Esophagus squamous epithelium (tissue), 5 donors: ENCODE measurements at regions of chr17 and their contacts with region 1.

Region 1: GRCh38 chr17:48678141-48678971 is 44.0 kb downstream of the PRAC1 start:
- DNase-seq: no peak
- H3K4me3 ChIP-seq: peak overlapping the region in 1 of 4 donors; percentile 43
- H3K27ac ChIP-seq: no peak overlapping the region
- H3K4me1 ChIP-seq: peaks cover 0 to 10% (median 6%) of the 10 kb centered on the region in 3 donors
- H3K27me3 ChIP-seq: peaks cover 0 to 97% (median 5%) of the 10 kb centered on the region in 4 donors
- CTCF ChIP-seq: peak; percentile 79 to 92 (median 82)
- POLR2A ChIP-seq: no peak

Region 2: GRCh38 chr17:48791128-48792032 is 113.0 kb after region 1 on chr17:
- intact Hi-C with region 1: loop called (anchors 10 kb)
- DNase-seq: no peak
- H3K4me3 ChIP-seq: no peak overlapping the region
- H3K27ac ChIP-seq: no peak overlapping the region
- H3K4me1 ChIP-seq: peaks cover 0 to 15% (median 0%) of the 10 kb centered on the region in 3 donors
- H3K27me3 ChIP-seq: peaks cover 0 to 99% (median 0%) of the 10 kb centered on the region in 4 donors
- CTCF ChIP-seq: peak; percentile 43 to 79 (median 68)
- POLR2A ChIP-seq: no peak

Region 3: DNA sequence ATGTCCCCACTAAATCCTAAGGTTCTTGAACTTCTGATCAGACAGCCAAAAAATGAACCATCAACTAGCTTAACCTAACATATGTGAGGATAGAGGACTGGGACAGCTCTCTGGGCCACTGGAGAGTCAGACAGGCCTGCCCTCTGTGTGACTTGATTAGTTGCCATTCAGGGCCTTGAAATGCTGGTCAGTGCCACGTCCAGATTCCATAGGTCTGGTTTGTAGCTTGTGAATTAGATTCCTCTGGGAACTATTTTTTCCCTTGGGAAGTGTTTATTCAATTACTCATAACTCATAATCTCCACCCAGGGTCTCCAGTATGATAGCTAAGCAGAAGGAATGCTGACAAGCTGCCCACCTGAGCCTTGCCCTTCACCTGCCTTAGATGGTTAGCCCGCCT is 367.0 kb after region 1 on chr17:
- intact Hi-C with region 1: loop called (anchors 10 kb)
- DNase-seq: no peak
- H3K4me3 ChIP-seq: no peak overlapping the region
- H3K27ac ChIP-seq: no peak overlapping the region
- H3K4me1 ChIP-seq: no peaks in the 10 kb centered on the region
- H3K27me3 ChIP-seq: peaks cover 0 to 91% (median 0%) of the 10 kb centered on the region in 4 donors
- CTCF ChIP-seq: no peak
- POLR2A ChIP-seq: no peak